Panc1 (cell line): ENCODE measurements at regions of chr10 and their contacts with region 1.

Region 1: DNA sequence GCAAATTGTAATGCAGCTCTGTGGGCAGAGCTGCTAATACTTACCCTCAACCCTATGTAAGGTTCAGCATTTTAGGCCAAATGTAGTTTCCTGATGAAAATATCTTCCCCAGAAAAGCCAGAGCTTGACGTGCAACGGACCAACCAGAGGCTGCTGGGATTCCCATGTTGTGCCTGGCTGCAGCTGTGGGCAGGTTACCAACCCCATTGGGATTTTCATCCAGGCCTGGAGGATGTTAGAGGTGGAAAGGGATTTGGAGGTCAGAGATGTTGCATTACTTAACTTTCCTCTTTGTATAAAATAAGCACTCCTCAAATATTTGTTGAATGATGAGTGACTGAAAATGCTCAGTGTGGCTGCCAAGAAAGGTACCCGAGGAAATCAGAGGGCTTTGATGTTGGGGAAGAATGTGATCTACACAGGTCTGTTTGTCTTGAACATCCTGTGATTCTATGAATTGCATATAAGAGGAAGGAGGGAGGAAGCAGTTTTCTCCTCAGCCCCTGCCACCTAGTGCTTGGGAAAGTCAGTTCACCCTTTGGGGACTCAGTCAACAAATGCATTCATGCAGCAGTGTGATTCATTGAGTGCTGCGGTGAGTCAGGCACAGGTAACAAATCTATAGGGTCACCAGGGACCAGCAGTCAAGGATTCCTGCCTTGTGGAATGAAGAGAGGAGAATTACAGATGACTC is 487.2 kb downstream of the RPS24 start:
- DNase-seq: peak; percentile 87
- ATAC-seq: peak; percentile 94
- H3K4me3 ChIP-seq: no peak overlapping the region
- H3K27ac ChIP-seq: no peak overlapping the region
- H3K4me1 ChIP-seq: peaks cover 4% of the 10 kb centered on the region; the same call in 1 of the 2 replicates
- H3K27me3 ChIP-seq: no peaks in the 10 kb centered on the region
- CTCF ChIP-seq: peak; percentile 56; the same call in 1 of the 2 replicates

Region 2: DNA sequence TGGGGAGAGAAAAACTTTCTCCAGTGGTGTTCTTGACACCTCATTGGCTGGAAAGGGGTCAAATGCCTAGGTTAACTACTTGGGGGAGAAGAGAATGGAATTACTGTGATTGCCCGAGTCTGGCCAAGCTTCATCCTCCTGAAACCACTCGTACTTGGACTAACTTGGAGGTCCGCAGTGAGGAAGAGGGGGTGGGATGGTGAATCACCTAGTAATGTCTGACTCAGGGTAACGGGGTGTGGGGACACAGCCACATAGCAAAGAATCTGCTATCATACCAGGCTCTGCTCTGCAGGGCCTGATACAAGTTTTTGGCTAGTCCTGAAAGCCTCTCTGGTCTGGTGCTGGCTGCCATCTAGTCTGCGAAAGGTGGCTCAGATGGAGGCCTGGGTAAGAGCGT is 296.3 kb before region 1 on chr10:
- CTCF ChIA-PET with region 1: no interaction called
- POLR2A ChIA-PET with region 1: no interaction called
- in situ Hi-C with region 1: no loop called
- intact Hi-C with region 1: loop called (anchors 10 kb)
- DNase-seq: no peak
- ATAC-seq: no peak
- H3K4me3 ChIP-seq: no peak overlapping the region
- H3K27ac ChIP-seq: no peak overlapping the region
- H3K4me1 ChIP-seq: no peaks in the 10 kb centered on the region
- H3K27me3 ChIP-seq: no peaks in the 10 kb centered on the region; the same call in 1 of the 2 replicates
- CTCF ChIP-seq: no peak